H1 (cell line): ENCODE measurements at regions of chr11 and their contacts with region 1.

Region 1: DNA sequence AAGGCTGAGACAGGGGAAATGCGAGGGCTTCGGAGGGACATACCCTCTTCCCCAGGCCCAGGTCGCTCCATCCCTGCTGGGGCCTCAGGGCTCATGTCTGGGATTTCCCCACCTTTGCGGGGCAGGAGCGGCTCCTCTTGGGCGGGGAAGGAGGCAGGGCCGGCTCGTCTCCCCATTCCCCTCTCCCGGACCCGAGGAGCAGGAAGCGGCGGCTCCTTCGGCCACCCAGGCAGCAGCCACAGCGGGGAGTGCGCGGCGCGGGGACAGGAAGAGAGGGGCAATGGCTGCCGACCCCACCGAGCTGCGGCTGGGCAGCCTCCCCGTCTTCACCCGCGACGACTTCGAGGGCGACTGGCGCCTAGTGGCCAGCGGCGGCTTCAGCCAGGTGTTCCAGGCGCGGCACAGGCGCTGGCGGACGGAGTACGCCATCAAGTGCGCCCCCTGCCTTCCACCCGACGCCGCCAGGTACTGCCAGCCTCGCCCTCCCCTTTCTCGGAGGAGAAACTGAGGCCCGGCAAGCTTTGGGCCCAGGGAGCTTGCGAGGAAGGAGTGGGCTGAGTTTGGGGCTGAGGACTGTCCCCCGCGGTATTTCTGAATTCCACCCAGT is at the start of gene ANKK1:
- DNase-seq: peak; percentile 41 to 86
- H3K4me3 ChIP-seq: peak within 1 kb of the TSS; percentile 31 to 55 (median 36); a peak in 7 of 8 replicates
- H3K27ac ChIP-seq: no peak within 1 kb of the TSS; the same call in 1 of the 2 replicates
- H3K4me1 ChIP-seq: peaks cover 4 to 10% (median 8%) of the 10 kb centered on the region in 4 experiments; a peak in 5 of 7 replicates
- H3K27me3 ChIP-seq: peaks cover 0 to 8% (median 4%) of the 10 kb centered on the region in 4 experiments; a peak in 3 of 7 replicates
- CTCF ChIP-seq: peak; percentile 85 to 94 (median 90)
- EP300 ChIP-seq: 0 out of 3 replicates have a peak, but pooled peaks of 1 of the 2 experiments have one; percentile 50
- POLR2A ChIP-seq: peak in 1 of 2 experiments; percentile 71; a peak in 2 of 3 replicates
- RAD21 ChIP-seq: peak; percentile 56 to 64
- total RNA-seq, gene ANKK1: not detected in 2 replicates

Region 2: DNA sequence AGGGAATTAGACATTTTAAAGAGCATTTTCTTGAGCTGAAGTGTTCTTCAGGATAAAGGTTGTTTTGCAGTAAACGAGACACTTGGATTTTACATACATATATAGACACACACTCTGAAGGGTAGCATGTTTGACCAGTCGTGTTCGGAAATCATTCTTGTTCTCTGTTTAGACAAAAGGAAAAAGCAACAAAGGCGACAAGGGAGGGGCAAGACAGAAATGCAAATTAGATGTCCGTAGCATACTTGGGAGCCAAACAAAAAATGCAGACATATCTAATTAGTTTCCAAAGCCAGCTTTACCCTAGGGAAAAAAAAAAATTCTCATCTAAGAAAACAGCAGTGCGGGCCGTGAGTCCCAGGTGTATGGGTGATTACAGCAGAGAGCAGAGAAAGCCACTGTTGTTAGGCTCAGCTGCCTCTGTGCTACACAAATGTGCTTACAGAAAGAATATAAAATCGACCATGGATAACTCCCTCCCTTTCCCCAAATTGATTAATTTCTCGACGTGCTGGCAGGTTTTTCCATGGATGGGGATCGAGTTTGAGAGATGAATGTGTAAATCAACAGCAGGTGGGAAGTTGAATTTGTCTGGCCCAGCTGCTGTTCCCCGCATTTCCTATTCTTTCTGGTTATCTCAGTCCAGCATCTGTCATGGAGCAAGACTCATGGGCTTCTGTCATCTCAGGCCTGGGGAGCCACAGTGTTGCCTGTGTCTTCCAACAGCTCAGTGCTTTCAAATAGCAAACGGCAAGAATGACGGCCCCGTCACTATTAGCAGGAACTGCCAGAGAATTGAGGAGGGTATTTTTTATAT is 249.8 kb before region 1 on chr11:
- CTCF ChIA-PET with region 1: no interaction called
- POLR2A ChIA-PET with region 1: no interaction called
- DNase-seq: no peak
- H3K4me3 ChIP-seq: no peak overlapping the region
- H3K27ac ChIP-seq: no peak overlapping the region
- H3K4me1 ChIP-seq: peaks cover 0 to 2% (median under 1%) of the 10 kb centered on the region in 4 experiments; a peak in 1 of 7 replicates
- H3K27me3 ChIP-seq: no peaks in the 10 kb centered on the region
- CTCF ChIP-seq: no peak
- EP300 ChIP-seq: no peak
- POLR2A ChIP-seq: no peak
- RAD21 ChIP-seq: no peak

Region 3: DNA sequence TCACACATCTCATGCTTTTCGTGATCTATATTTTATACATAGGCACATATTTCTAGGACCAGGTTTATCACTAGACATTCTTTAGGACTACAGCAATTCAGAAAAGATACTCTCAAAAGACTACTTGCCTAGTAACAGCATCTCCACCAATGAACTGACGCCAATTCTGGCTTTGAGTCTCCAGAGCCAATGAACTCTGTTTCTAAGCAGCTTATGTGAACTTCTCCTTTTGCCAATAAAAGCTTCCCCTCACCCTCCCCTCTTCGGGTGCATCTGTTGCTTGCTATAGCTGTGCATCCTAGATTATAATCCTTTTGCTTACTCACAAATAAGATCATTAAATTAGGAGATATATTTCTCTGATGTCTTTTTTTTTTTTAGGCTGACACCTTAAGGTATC is 11.6 kb before region 1 on chr11:
- CTCF ChIA-PET with region 1: interaction called, 17 read pairs
- POLR2A ChIA-PET with region 1: interaction called, 3 read pairs
- DNase-seq: no peak
- H3K4me3 ChIP-seq: no peak overlapping the region
- H3K27ac ChIP-seq: no peak overlapping the region
- H3K4me1 ChIP-seq: peaks cover 0 to 2% (median 0%) of the 10 kb centered on the region in 4 experiments; a peak in 1 of 7 replicates
- H3K27me3 ChIP-seq: no peaks in the 10 kb centered on the region
- CTCF ChIP-seq: no peak
- EP300 ChIP-seq: no peak
- POLR2A ChIP-seq: no peak
- RAD21 ChIP-seq: no peak

Region 4: DNA sequence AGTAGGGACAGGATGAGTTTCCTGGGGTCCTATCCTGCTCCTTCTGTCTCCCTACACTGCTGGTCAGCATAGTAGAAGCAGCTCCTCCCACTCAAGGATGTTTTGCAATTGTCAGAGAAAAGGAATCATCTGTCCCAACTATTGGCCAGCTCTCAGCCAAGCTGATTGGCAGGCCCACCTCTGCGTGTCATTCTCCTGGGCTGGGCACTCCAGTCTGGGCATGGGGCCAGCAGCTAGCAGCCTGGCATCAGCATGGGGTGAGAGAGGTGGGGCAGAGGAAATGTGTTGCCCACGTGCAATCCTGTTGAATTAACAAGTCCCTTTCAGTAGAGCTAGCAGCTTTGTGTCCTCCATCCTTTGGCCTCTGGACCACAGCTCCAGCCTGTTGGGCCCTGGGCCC is 14.0 kb after region 1 on chr11:
- CTCF ChIA-PET with region 1: interaction called, 18 read pairs
- POLR2A ChIA-PET with region 1: interaction called, 4 read pairs
- DNase-seq: no peak
- H3K4me3 ChIP-seq: no peak overlapping the region
- H3K27ac ChIP-seq: no peak overlapping the region
- H3K4me1 ChIP-seq: no peaks in the 10 kb centered on the region
- H3K27me3 ChIP-seq: no peaks in the 10 kb centered on the region
- CTCF ChIP-seq: no peak
- EP300 ChIP-seq: no peak
- POLR2A ChIP-seq: no peak
- RAD21 ChIP-seq: no peak